PC-9 (cell line): ENCODE measurements at regions of chr3 and their contacts with region 1.

Region 1: DNA sequence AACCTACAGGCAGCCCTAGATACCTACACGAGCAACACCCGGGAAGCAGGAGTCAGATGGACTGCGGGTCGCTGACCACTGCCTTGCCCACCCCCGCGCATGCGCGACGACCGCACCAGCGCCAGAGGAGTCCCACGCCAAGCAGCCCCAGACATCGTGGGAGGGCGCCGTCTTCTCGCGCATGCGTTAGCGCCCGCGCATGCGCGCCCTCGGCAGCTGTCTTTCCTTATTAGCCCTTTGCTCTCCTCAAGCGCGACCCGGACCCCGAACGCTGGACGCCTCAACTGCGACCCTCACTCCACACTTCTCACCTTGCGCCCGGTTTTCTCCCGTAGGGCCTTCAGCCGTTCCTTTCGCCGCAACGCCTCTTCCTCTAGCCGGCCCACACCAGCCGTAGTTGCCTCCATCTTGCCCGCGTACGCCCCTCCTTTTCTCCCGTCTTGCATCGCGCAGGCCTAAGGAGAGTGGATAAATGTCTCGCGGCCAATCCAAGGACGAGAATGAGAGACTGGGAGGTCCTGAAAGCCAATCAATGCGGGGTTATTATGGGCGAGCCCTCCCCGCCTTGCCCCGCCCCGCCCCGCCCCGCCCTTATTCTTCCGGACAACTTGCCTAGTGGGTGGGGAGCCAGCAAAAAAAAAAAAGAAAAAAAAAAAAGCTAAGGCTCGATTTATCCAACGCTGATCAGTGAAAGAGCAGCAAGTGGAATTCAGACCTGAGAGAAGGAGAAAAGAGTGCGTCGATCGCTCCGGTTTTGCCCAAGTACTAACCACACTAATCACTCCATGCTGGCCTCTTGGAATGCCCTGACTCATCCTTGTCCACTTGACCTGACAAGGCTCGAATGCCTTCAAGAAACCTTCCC is at the start of gene CCDC12:
- DNase-seq: peak; percentile 94 to 97
- H3K4me3 ChIP-seq: peak within 1 kb of the TSS; percentile 88
- H3K27ac ChIP-seq: peak within 1 kb of the TSS; percentile 62
- H3K4me1 ChIP-seq: peaks cover 39% of the 10 kb centered on the region
- H3K27me3 ChIP-seq: no peaks in the 10 kb centered on the region
- CTCF ChIP-seq: no peak
- total RNA-seq, gene CCDC12: 39.3 and 43.1 TPM in 2 replicates

Region 2: GRCh38 chr3:46695177-46695961 is 281.2 kb before region 1 on chr3:
- CTCF ChIA-PET with region 1: no interaction called
- POLR2A ChIA-PET with region 1: interaction called, 7 read pairs
- intact Hi-C with region 1: loop called (anchors 2 kb)
- DNase-seq: no peak
- H3K4me3 ChIP-seq: no peak overlapping the region
- H3K27ac ChIP-seq: no peak overlapping the region
- H3K4me1 ChIP-seq: peaks cover 31% of the 10 kb centered on the region
- H3K27me3 ChIP-seq: no peaks in the 10 kb centered on the region
- CTCF ChIP-seq: peak; percentile 56

Region 3: DNA sequence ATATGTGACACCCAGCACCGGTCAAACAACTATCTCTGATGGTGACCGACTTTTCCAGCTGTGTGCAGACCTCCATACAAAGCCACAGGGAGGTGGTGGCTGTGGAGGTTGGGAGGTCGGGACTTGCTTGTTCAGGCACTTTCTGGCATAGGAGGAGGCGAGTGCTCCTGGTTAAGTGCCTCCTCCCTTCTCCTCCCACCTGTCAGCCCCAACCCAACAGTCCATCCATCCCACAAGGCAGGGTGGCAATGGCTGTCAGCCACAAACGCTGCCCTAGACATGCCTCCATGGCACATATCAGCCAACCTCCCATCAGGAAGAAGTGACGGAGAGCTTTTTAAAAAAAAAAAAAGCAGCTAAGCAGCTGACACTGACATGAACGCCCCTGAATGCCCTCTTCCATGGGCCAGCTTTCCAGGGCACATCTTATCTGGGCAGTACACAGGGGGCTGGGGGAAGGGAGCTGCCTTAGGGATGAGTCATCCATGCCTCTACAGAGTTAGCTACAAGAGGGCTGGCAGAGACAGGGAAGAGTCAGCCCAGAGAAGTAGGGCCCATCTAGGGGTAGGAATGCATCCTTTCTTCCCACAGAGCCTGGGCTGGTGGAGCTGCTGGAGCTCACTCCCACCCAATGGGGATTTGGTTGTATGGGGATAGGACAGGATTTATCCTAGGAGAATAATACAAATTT is 41.2 kb before region 1 on chr3:
- CTCF ChIA-PET with region 1: interaction called, 11 read pairs
- POLR2A ChIA-PET with region 1: interaction called, 15 read pairs
- intact Hi-C with region 1: loop called (anchors 1 kb)
- DNase-seq: peak; percentile 86 to 90
- H3K4me3 ChIP-seq: no peak overlapping the region
- H3K27ac ChIP-seq: peak overlapping the region; percentile 53
- H3K4me1 ChIP-seq: peaks cover 63% of the 10 kb centered on the region
- H3K27me3 ChIP-seq: no peaks in the 10 kb centered on the region
- CTCF ChIP-seq: peak; percentile 65

Region 4: DNA sequence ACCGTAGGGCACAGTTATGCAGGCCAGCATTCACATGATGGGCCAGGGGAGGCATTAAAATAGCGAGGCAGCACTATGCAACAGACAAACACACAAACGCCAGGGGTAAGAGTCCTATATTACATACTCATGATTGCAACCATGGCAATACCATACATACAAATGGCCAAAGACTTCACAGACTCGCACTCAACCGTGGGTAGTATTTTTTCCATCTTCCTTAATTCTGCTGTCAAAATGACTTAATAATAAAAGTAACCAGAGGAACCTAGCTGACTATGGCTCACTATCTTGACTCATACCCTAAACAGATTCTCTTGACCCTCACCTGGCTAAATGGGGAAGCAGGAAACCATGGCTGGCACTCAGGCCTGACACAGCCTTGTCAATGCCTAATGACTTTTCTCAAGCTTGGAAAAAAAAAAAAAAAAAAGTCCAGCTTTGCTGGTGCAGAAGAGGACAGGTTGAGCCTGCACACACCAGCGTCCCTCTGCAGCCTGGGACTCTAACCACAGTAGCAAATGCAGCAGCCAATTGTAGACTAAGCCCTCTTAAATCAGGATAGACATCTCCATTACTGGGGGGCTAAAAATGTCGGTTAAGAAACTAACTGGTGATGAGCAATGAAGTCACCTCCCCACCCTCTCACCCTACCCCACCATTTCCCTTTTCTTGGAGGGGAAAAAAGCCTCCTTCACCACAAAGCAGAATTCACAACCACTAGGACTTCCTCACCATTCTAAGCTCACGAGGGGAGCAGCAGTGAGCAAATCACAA is 23.1 kb before region 1 on chr3:
- CTCF ChIA-PET with region 1: interaction called, 5 read pairs
- POLR2A ChIA-PET with region 1: interaction called, 10 read pairs
- intact Hi-C with region 1: loop called (anchors 1 kb)
- DNase-seq: no peak
- H3K4me3 ChIP-seq: no peak overlapping the region
- H3K27ac ChIP-seq: no peak overlapping the region
- H3K4me1 ChIP-seq: peaks cover 18% of the 10 kb centered on the region
- H3K27me3 ChIP-seq: no peaks in the 10 kb centered on the region
- CTCF ChIP-seq: no peak

Region 5: DNA sequence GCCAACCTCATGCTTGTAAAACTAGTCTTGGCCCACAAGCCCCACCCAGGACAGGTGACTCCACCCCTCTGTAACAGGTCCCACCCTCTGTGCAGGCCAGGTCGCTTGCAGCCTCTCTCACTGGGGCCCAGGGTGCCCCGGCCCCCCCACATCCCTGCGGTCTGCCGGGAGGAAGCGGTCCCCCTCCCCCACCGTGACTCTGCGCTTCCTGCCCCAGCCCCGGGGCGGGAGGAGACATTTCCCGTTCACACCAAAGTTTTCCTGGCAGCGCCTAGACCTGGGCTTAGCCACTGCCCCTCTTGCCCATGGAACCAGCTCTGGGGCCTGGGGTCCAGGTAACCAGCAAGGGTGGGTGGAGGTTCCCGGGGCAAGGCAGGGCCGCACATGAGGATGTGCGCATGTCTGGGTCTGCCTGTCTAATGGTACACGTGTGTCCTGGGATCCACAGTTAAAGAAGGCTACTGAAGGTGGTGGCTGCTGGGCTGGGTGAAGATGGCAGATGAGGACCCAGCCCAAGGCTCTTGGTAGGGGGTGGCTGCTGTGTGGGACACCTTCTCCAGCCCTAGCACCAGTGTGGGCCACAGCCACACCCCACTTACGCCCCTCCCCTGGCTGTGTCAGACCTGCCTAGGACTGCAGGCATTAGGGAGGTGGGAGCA is 11.3 kb after region 1 on chr3:
- CTCF ChIA-PET with region 1: no interaction called
- POLR2A ChIA-PET with region 1: interaction called, 11 read pairs
- intact Hi-C with region 1: no loop called
- DNase-seq: peak in 1 of 2 experiments; percentile 82
- H3K4me3 ChIP-seq: no peak overlapping the region
- H3K27ac ChIP-seq: no peak overlapping the region
- H3K4me1 ChIP-seq: peaks cover 2% of the 10 kb centered on the region
- H3K27me3 ChIP-seq: no peaks in the 10 kb centered on the region
- CTCF ChIP-seq: no peak